ENCODE measurements at regions of chr11 and their contacts with region 1.

Region 1: GRCh38 chr11:91947215-91947820 is 277.3 kb upstream of the FAT3 start:
- DNase-seq: no peak
- H3K4me3 ChIP-seq: no peak overlapping the region
- H3K27ac ChIP-seq: no peak overlapping the region
- H3K4me1 ChIP-seq: peaks cover 22% of the 10 kb centered on the region
- H3K27me3 ChIP-seq: no peaks in the 10 kb centered on the region
- CTCF ChIP-seq: no peak
- POLR2A ChIP-seq: no peak

Region 2: GRCh38 chr11:91653079-91653754 is 294.1 kb before region 1 on chr11:
- intact Hi-C with region 1: no loop called
- DNase-seq: no peak
- H3K4me3 ChIP-seq: no peak overlapping the region
- H3K27ac ChIP-seq: no peak overlapping the region
- H3K4me1 ChIP-seq: no peaks in the 10 kb centered on the region
- H3K27me3 ChIP-seq: no peaks in the 10 kb centered on the region
- CTCF ChIP-seq: no peak
- POLR2A ChIP-seq: no peak

Region 3: DNA sequence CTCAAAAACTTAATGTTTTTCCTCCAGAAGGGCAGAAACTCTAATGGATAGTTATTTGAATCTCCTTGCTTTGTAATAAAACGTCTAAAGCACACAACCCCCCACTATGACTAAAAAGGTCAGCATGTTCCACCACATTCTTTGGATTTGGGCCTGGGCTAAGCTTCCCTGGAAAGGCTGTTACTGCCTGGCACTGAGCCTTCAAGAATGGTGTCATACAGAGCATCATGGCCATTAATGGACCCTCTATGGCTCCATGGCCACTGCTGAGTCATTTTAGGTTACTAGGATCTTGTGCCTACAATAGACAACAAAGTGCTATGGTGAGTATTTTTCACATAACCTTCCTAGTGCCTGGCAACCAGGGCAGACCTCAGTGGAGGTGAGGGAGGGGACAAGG is 34.7 kb after region 1 on chr11:
- intact Hi-C with region 1: loop called (anchors 5 kb)
- DNase-seq: peak in 1 of 2 donors; percentile 91
- H3K4me3 ChIP-seq: no peak overlapping the region
- H3K27ac ChIP-seq: peak overlapping the region; percentile 79
- H3K4me1 ChIP-seq: no peaks in the 10 kb centered on the region
- H3K27me3 ChIP-seq: no peaks in the 10 kb centered on the region
- CTCF ChIP-seq: no peak
- POLR2A ChIP-seq: no peak

Region 4: GRCh38 chr11:92224407-92225124 is 277.2 kb after region 1 on chr11 and contains the start of gene FAT3:
- intact Hi-C with region 1: no loop called
- DNase-seq: no peak
- H3K4me3 ChIP-seq: peak within 1 kb of the TSS; percentile 46 to 48
- H3K27ac ChIP-seq: peak within 1 kb of the TSS; percentile 74
- H3K4me1 ChIP-seq: peaks cover 24% of the 10 kb centered on the region
- H3K27me3 ChIP-seq: no peaks in the 10 kb centered on the region
- CTCF ChIP-seq: no peak
- POLR2A ChIP-seq: peak in 1 of 2 donors; percentile 25
- total RNA-seq, gene FAT3: 9.6 TPM

Region 5: GRCh38 chr11:92482492-92483060 is 535.3 kb after region 1 on chr11:
- intact Hi-C with region 1: no loop called
- DNase-seq: no peak
- H3K4me3 ChIP-seq: no peak overlapping the region
- H3K27ac ChIP-seq: no peak overlapping the region
- H3K4me1 ChIP-seq: no peaks in the 10 kb centered on the region
- H3K27me3 ChIP-seq: no peaks in the 10 kb centered on the region
- CTCF ChIP-seq: no peak
- POLR2A ChIP-seq: no peak

Measured in vagina (tissue), 2 donors.